ENCODE measurements at regions of chr7 and their contacts with region 1.

Region 1: DNA sequence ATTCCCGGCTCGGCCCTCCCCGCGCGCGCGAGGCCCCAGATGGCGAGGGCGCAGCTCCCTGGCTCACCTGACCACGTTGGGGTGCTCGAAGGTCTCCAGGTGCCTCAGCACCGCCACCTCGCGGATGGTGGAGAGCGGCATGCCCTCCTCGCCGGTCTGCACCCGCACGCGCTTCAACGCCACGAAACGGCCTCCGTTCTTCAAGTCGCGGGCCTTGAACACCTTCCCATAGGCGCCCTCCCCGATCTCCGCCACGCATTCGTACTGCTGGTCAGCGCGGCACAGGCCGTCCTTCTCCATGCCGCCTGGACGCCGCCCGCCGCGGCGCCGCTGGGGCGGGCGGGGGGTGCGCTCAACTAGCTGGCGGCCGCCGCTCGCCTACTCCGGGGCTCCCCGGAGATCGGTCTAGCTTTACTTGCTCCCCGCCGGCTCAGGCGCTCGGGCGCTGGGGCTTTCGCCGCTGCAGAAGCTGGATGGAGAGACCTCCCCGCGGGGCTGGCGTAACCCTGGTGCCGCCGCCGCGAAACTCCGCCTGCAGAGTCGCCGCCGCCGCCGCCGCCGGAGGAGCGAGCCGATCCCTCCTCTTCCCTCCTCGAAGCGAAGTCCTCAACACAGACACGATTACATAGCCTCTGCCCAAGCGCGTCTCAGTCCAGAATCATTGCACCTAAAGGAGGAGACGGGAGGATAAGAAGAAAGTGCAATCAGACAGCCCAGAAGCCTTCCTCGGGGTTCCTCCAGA is 3.2 kb downstream of the CDK6 start:
- DNase-seq: peak; percentile 78
- H3K4me3 ChIP-seq: peak overlapping the region; percentile 68 to 80 (median 71)
- H3K27ac ChIP-seq: peak overlapping the region; percentile 78
- H3K4me1 ChIP-seq: peaks cover 35% of the 10 kb centered on the region
- H3K27me3 ChIP-seq: peaks cover 0 to 12% of the 10 kb centered on the region in 2 experiments
- CTCF ChIP-seq: peak; percentile 79 to 92
- POLR2A ChIP-seq: no peak

Region 2: GRCh38 chr7:92590711-92591310 is 242.4 kb before region 1 on chr7:
- CTCF ChIA-PET with region 1: interaction called, 4 read pairs
- POLR2A ChIA-PET with region 1: no interaction called
- dilution Hi-C with region 1: no loop called
- intact Hi-C with region 1: loop called (anchors 1 kb)
- DNase-seq: no peak
- H3K4me3 ChIP-seq: peak overlapping the region in 2 of 3 experiments; percentile 33 to 95
- H3K27ac ChIP-seq: no peak overlapping the region
- H3K4me1 ChIP-seq: peaks cover 12% of the 10 kb centered on the region
- H3K27me3 ChIP-seq: no peaks in the 10 kb centered on the region
- CTCF ChIP-seq: no peak
- POLR2A ChIP-seq: no peak

Region 3: GRCh38 chr7:92658671-92659070 is 174.5 kb before region 1 on chr7:
- CTCF ChIA-PET with region 1: no interaction called
- POLR2A ChIA-PET with region 1: no interaction called
- dilution Hi-C with region 1: no loop called
- intact Hi-C with region 1: no loop called
- DNase-seq: no peak
- H3K4me3 ChIP-seq: no peak overlapping the region
- H3K27ac ChIP-seq: no peak overlapping the region
- H3K4me1 ChIP-seq: no peaks in the 10 kb centered on the region
- H3K27me3 ChIP-seq: no peaks in the 10 kb centered on the region
- CTCF ChIP-seq: no peak
- POLR2A ChIP-seq: no peak

Region 4: GRCh38 chr7:92691578-92691977 is 141.6 kb before region 1 on chr7:
- CTCF ChIA-PET with region 1: interaction called, 77 read pairs
- POLR2A ChIA-PET with region 1: no interaction called
- dilution Hi-C with region 1: no loop called
- intact Hi-C with region 1: loop called (anchors 1 kb)
- DNase-seq: peak; percentile 77
- H3K4me3 ChIP-seq: no peak overlapping the region
- H3K27ac ChIP-seq: peak overlapping the region; percentile 19
- H3K4me1 ChIP-seq: peaks cover 18% of the 10 kb centered on the region
- H3K27me3 ChIP-seq: no peaks in the 10 kb centered on the region
- CTCF ChIP-seq: peak; percentile 32 to 34
- POLR2A ChIP-seq: no peak

Region 5: DNA sequence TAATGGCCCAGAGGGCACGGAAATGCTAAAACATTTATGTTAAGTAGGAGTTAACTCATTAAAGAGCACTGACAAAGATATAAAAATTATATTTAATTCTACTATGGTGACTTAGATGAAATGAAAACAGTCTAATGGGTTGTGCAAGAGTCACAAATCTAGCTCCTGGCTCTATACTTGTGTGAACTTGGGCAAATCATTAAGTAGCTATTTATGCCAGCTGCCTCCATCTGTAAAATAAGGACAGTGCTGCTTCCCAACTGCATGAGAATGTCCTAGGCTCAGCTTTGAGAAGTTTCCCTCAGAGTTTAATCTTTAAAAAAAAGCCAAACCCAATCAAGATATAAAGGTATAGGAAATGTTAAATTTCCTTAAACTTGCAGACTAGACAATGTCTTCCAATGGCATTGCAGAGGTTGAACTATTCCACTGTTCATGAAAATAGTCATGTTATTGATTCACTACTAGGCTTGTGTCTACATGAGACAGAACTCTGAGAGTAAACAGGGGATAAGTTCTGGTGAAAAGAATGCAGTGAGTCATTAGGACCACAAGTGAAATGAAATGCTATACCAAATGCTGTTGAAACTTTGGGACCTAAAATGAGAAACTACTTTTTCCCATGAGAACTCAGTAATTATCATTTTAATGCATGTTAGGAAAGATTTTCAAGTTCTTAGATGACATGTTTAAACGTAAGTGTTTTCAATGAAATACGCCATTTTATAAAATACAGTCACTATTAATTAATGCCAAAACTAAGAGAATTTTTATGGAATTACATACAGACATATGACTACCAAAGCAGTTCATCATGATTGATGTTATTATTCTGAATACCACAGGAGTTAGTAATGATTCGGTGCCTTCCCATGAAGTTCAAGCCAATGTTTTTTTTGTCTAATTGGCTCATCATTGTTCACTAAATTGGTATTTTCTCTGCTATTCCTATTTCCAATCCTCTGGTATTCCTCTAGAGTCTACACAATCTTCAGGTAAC is 81.0 kb before region 1 on chr7:
- CTCF ChIA-PET with region 1: interaction called, 3 read pairs
- POLR2A ChIA-PET with region 1: no interaction called
- dilution Hi-C with region 1: no loop called
- intact Hi-C with region 1: loop called (anchors 1 kb)
- DNase-seq: peak; percentile 77
- H3K4me3 ChIP-seq: no peak overlapping the region
- H3K27ac ChIP-seq: peak overlapping the region; percentile 59
- H3K4me1 ChIP-seq: peaks cover 21% of the 10 kb centered on the region
- H3K27me3 ChIP-seq: no peaks in the 10 kb centered on the region
- CTCF ChIP-seq: no peak
- POLR2A ChIP-seq: no peak

Region 6: GRCh38 chr7:92809397-92810241 is 23.6 kb before region 1 on chr7:
- CTCF ChIA-PET with region 1: interaction called, 9 read pairs
- POLR2A ChIA-PET with region 1: no interaction called
- dilution Hi-C with region 1: no loop called
- intact Hi-C with region 1: loop called (anchors 1 kb)
- DNase-seq: peak; percentile 90
- H3K4me3 ChIP-seq: peak overlapping the region in 1 of 3 experiments; percentile 32
- H3K27ac ChIP-seq: peak overlapping the region; percentile 86
- H3K4me1 ChIP-seq: peaks cover 29% of the 10 kb centered on the region
- H3K27me3 ChIP-seq: no peaks in the 10 kb centered on the region
- CTCF ChIP-seq: no peak
- POLR2A ChIP-seq: no peak

Region 7: GRCh38 chr7:93015779-93016481 is 182.7 kb after region 1 on chr7:
- CTCF ChIA-PET with region 1: interaction called, 9 read pairs
- POLR2A ChIA-PET with region 1: no interaction called
- dilution Hi-C with region 1: no loop called
- intact Hi-C with region 1: loop called (anchors 1 kb)
- DNase-seq: peak; percentile 57
- H3K4me3 ChIP-seq: no peak overlapping the region
- H3K27ac ChIP-seq: peak overlapping the region; percentile 89
- H3K4me1 ChIP-seq: peaks cover 54% of the 10 kb centered on the region
- H3K27me3 ChIP-seq: no peaks in the 10 kb centered on the region
- CTCF ChIP-seq: no peak
- POLR2A ChIP-seq: no peak

Measured in endothelial cell of umbilical vein (primary cell).